Endothelial cell of umbilical vein (primary cell): ENCODE measurements at regions of chr11 and their contacts with region 1.

Region 1: DNA sequence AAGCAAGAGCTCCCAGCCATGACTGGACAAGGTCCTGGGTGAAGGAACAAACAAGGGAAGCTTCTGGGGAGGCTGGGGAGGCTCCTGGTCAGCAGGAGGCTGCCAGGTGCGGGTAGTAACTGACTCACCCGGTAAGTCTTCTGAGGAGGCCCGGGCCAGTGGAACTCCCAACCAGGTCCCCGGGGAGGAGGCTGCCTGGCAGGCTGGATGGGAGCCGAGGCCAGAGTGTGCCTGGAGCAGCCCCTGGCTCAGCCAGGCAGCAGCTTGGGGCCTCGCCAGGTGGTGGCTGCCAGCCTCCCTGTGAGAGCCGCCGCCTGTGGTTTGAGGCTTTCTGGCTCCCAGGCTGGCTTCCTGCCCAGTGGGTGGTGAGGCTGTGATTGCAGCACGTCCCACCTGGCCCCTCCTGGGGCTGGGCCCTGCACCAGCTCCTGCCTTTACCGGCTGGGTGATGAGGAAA is 46.2 kb downstream of the IGF2 start:
- DNase-seq: no peak
- H3K4me3 ChIP-seq: no peak overlapping the region
- H3K27ac ChIP-seq: no peak overlapping the region
- H3K4me1 ChIP-seq: peaks cover 13% of the 10 kb centered on the region
- H3K27me3 ChIP-seq: no peaks in the 10 kb centered on the region
- CTCF ChIP-seq: no peak
- POLR2A ChIP-seq: no peak

Region 2: DNA sequence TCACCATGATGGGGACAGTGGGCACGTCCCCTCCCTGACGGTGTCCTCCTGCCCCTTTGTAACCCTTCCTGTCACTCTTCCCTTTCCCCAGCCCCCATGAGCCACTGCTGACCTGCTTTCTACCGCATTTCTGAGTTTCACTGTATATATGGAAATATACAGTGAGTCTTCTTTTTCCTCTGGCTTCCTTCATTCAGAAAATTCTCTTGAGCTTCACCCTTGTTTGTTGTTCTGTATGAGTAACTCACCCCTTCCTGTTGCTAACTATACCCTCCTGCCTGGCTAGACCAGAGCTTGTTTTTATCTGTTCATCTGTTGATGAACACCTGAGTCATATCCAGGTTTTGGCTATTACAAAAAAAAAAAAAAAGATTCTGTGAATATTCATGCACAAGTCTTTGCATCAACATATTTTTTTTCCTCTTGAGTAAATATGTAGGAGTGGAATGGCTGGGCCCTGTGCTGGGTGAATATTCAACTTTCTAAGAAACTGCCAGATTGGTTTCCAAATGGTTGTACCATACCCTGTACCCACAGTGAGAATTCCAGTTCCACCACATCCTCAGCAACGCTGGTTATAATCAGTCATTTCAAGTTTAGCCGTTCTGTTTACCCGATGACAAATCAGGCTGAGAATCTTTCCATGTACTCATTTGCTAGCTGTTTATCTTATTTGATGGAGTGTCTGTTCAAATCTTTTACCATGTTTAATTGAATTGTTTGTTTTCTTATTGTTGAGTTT is 15.8 kb before region 1 on chr11:
- CTCF ChIA-PET with region 1: interaction called, 5 read pairs
- POLR2A ChIA-PET with region 1: no interaction called
- dilution Hi-C with region 1: no loop called
- intact Hi-C with region 1: loop called (anchors 1 kb)
- DNase-seq: peak; percentile 86
- H3K4me3 ChIP-seq: no peak overlapping the region
- H3K27ac ChIP-seq: peak overlapping the region; percentile 80
- H3K4me1 ChIP-seq: peaks cover 17% of the 10 kb centered on the region
- H3K27me3 ChIP-seq: no peaks in the 10 kb centered on the region
- CTCF ChIP-seq: no peak
- POLR2A ChIP-seq: no peak

Region 3: GRCh38 chr11:2109541-2110019 is 16.6 kb after region 1 on chr11:
- CTCF ChIA-PET with region 1: interaction called, 10 read pairs
- POLR2A ChIA-PET with region 1: no interaction called
- dilution Hi-C with region 1: no loop called
- intact Hi-C with region 1: loop called (anchors 1 kb)
- DNase-seq: peak; percentile 93
- H3K4me3 ChIP-seq: no peak overlapping the region
- H3K27ac ChIP-seq: peak overlapping the region; percentile 55
- H3K4me1 ChIP-seq: peaks cover 12% of the 10 kb centered on the region
- H3K27me3 ChIP-seq: no peaks in the 10 kb centered on the region
- CTCF ChIP-seq: peak; percentile 10 to 49
- POLR2A ChIP-seq: peak; percentile 24